ENCODE measurements at regions of chr11 and their contacts with region 1.

Region 1: DNA sequence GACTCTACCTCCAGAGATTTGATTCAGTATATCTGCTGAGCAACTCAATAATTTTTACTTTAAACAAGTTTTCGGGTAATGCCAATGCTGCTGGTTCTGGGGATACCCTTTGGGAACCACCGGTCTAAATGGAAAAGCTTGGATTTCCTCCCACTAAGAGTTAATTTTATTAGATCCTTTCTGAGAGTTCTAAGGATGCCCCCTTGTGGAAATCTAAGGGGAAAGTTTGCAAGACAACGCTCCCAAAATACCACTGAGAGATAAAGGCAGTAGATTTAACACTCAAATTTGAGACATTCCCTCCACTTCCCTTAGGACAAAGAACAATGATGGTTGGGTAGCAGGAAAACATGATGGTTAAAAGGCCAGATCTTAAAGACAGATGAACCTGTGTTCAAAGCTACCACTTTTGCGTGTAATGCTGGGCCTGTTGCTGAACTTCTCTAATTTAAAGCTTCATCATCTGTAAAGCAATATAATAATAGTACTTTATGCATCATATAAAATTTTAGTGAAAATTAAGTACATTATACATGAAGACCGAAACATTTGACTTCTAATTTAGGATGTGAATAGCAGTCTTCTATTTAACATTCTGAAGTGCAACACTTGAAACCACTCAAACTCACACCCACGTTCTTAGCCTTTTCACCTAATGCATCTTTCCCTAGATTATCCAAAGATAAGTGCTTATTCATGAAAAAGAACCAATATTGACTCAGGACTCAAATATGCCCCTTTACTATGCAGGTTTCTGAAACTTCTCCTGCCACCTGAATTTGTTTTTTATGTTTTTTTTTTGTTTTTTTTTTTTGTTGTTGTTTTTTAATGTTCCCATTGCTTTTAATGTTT is 110.1 kb upstream of the LUZP2 start:
- DNase-seq: no peak
- H3K4me3 ChIP-seq: no peak overlapping the region
- H3K27ac ChIP-seq: no peak overlapping the region
- H3K4me1 ChIP-seq: no peaks in the 10 kb centered on the region
- H3K27me3 ChIP-seq: no peaks in the 10 kb centered on the region
- CTCF ChIP-seq: peak in 3 of 5 experiments; percentile 14 to 30 (median 28)
- EP300 ChIP-seq: no peak
- POLR2A ChIP-seq: no peak

Region 2: GRCh38 chr11:23540101-23540561 is 846.6 kb before region 1 on chr11:
- in situ Hi-C with region 1: loop called in 1 of 4 experiments (anchors 25 kb)
- intact Hi-C with region 1: no loop called
- DNase-seq: no peak
- H3K4me3 ChIP-seq: no peak overlapping the region
- H3K27ac ChIP-seq: no peak overlapping the region
- H3K4me1 ChIP-seq: peaks cover 0 to 10% (median 2%) of the 10 kb centered on the region in 4 donors
- H3K27me3 ChIP-seq: no peaks in the 10 kb centered on the region
- CTCF ChIP-seq: peak; percentile 60 to 80 (median 65)
- EP300 ChIP-seq: no peak
- POLR2A ChIP-seq: no peak

Region 3: GRCh38 chr11:24457985-24458384 is 71.2 kb after region 1 on chr11:
- in situ Hi-C with region 1: no loop called
- intact Hi-C with region 1: no loop called
- DNase-seq: no peak
- H3K4me3 ChIP-seq: no peak overlapping the region
- H3K27ac ChIP-seq: no peak overlapping the region
- H3K4me1 ChIP-seq: no peaks in the 10 kb centered on the region
- H3K27me3 ChIP-seq: no peaks in the 10 kb centered on the region
- CTCF ChIP-seq: no peak
- EP300 ChIP-seq: no peak
- POLR2A ChIP-seq: no peak

Measured in transverse colon (tissue), 4 donors.